AG04449 (cell line): ENCODE measurements at regions of chr12 and their contacts with region 1.

Region 1: GRCh38 chr12:113174461-113175384 is 10.6 kb downstream of the DDX54 start:
- DNase-seq: no peak
- H3K4me3 ChIP-seq: no peak overlapping the region
- CTCF ChIP-seq: peak; percentile 97

Region 2: DNA sequence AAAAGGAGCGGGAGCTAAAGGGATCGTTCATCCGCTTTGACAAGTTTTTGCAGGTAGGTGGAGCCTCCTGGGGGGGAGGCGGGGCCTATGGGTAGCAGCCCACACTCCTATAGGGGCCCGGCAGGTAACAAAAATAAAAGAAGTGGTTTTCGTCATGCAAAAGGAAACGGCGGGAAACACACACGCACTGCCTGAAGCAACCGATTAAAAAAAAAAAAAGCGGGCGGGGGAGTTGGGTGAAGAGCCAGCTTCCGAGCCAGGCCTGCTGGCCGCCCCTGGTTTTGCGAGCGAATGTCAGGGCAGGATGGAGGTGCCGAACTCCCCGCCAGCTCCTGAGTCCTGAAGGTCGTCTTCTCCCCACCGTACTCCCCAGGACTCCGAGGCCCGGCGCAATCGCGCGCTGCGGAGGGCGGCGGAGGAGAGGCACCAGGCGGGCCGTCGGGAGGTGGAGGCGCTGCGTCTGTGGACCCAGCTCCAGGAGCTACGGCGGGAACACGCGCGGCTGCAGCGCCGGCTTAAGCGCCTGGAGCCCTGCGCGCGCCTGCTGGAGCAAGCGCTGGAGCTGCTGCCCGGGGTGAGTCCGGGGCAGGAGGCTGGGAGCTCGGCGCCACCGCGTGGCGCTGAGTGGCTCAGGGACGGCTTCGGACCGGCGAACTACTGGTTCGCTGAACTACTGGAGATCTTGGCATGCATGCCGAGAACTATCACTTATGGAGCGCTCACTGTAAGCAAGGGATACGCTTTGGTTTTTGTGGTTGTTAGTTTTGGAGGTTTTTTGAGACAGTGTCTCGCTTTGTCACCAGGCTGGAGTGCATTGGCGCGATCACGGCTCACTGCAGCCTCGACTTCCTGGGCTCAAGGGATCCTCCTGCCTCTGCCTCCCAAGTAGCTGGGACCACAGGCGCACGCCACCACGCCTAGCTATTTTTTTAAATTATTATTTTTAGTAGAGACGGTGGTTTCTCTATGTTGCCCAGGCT is 21.6 kb before region 1 on chr12:
- CTCF ChIA-PET with region 1: interaction called, 43 read pairs
- POLR2A ChIA-PET with region 1: no interaction called
- DNase-seq: no peak
- H3K4me3 ChIP-seq: peak overlapping the region; percentile 42
- CTCF ChIP-seq: peak; percentile 61

Region 3: DNA sequence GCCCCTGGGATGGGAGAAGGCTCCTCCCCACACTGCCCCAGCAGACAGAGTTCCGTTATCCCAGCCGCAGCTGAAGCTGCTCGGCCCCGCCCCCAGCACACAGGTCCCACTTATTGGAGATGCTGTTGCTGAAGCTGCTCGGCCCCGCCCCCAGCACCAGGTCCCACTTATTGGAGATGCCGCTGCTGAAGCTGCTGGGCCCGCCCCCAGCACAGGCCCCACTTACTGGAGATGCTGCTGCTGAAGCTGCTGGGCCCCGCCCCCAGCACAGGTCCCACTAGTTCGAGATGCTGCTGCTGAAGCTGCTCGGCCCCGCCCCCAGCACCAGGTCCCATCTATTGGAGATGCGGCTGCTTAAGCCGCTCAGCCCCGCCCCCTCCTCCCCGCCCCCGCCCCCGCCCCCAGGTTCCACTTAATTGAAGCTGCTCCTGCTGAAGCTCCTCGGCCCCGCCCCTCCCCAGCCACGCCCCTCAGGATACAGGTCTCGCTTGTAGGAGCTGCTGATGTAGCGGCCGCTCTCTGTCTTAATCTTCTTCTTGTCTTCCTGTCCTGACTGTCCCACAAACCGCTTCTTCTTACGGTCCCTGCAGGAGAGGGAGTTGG is 13.2 kb before region 1 on chr12:
- CTCF ChIA-PET with region 1: interaction called, 38 read pairs
- POLR2A ChIA-PET with region 1: interaction called, 4 read pairs
- DNase-seq: no peak
- H3K4me3 ChIP-seq: no peak overlapping the region
- CTCF ChIP-seq: no peak

Region 4: GRCh38 chr12:113184900-113185773 is 10.4 kb after region 1 on chr12 and contains the starts of genes DDX54 and RITA1:
- CTCF ChIA-PET with region 1: interaction called, 39 read pairs
- POLR2A ChIA-PET with region 1: interaction called, 4 read pairs
- DNase-seq: peak; percentile 54
- H3K4me3 ChIP-seq: peak within 1 kb of the TSS; percentile 87
- CTCF ChIP-seq: no peak

Region 5: GRCh38 chr12:113261847-113262470 is 87.2 kb after region 1 on chr12:
- CTCF ChIA-PET with region 1: no interaction called
- POLR2A ChIA-PET with region 1: no interaction called
- DNase-seq: no peak
- H3K4me3 ChIP-seq: no peak overlapping the region
- CTCF ChIP-seq: no peak